MCF 10A (cell line): ENCODE measurements at regions of chr1 and their contacts with region 1.

Region 1: DNA sequence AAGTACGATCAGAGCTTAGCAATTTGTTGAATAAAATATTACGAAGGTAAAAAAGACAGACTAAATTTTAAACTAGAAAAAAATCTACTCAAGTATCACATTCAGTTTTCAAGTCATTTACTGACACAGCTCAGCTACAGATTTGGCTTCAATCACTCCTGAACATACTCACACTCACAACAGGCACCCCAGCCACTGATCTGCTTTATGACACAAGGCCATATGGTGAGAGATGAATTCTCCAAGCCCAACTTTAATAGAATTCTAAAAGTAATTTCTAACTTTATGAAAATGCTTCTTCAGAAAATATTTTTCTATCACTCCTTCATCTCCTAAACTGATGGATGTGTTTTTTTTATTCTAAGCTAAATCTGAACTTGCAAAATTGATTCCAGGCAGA is 337.1 kb downstream of the HHIPL2 start:
- DNase-seq: no peak
- H3K4me3 Mint-ChIP-seq: no peak overlapping the region
- H3K27ac Mint-ChIP-seq: no peak overlapping the region
- H3K4me1 Mint-ChIP-seq: no peaks in the 10 kb centered on the region
- H3K27me3 Mint-ChIP-seq: no peaks in the 10 kb centered on the region
- CTCF ChIP-seq: no peak

Region 2: GRCh38 chr1:222195857-222196256 is 14.9 kb before region 1 on chr1:
- CTCF ChIA-PET with region 1: interaction called, 9 read pairs
- POLR2A ChIA-PET with region 1: interaction called, 10 read pairs
- intact Hi-C with region 1: loop called (anchors 1 kb)
- DNase-seq: no peak
- H3K4me3 Mint-ChIP-seq: no peak overlapping the region
- H3K27ac Mint-ChIP-seq: no peak overlapping the region
- H3K4me1 Mint-ChIP-seq: no peaks in the 10 kb centered on the region
- H3K27me3 Mint-ChIP-seq: no peaks in the 10 kb centered on the region
- CTCF ChIP-seq: no peak